Esophagus muscularis mucosa (tissue), 4 donors: ENCODE measurements at regions of chr3 and their contacts with region 1.

Region 1: DNA sequence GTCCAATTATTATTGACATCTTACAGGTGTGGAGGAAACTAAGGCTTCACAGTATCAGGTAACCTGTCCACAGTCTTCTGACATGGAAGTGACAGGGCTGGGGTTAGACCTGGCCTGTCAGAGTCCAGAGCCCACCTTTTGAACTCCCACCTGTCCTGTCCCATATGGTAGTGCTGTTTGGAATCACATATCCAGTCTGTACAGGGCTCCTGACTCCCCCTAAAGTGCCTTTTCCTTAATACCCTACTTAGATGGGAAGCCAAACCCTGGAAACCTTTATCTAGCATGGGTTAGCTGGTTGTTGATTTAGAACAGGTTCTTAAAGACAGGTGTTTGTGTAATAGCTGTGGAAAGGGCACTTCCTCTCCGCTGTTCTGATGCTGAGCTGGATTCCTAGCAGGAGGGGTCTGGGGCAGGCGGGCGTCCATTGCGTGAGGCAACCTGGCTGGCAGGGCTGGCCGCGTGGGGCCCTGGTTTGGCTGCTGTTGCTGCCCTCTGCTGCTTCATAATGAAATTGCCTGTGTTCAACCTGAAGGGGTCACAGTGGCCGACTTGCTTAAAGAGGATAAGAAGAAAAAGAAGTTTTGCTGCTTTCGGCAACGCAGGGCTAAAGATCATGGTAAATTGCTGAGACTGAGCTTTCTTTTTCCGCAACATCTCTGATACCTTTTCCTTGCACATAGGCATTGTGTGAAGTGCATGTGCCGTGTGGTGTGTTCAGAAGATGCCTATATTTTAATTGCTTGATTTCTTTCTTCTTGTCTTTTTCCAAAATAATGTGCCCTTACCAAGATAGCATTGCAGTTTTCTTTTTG is 136.2 kb downstream of the CHDH start:
- DNase-seq: peak; percentile 24
- H3K4me3 ChIP-seq: no peak overlapping the region
- H3K27ac ChIP-seq: no peak overlapping the region
- H3K4me1 ChIP-seq: peaks cover 6 to 13% (median 9%) of the 10 kb centered on the region in 4 donors
- H3K27me3 ChIP-seq: no peaks in the 10 kb centered on the region
- CTCF ChIP-seq: peak; percentile 82 to 86 (median 82)
- EP300 ChIP-seq: no peak
- POLR2A ChIP-seq: no peak

Region 2: GRCh38 chr3:53219895-53220483 is 490.1 kb before region 1 on chr3:
- intact Hi-C with region 1: loop called (anchors 5 kb)
- DNase-seq: no peak
- H3K4me3 ChIP-seq: no peak overlapping the region
- H3K27ac ChIP-seq: no peak overlapping the region
- H3K4me1 ChIP-seq: peaks cover 0 to 6% (median 2%) of the 10 kb centered on the region in 4 donors
- H3K27me3 ChIP-seq: no peaks in the 10 kb centered on the region
- CTCF ChIP-seq: peak; percentile 82 to 90 (median 86)
- EP300 ChIP-seq: no peak
- POLR2A ChIP-seq: no peak

Region 3: GRCh38 chr3:53303957-53304356 is 406.1 kb before region 1 on chr3:
- intact Hi-C with region 1: loop called (anchors 2 kb)
- DNase-seq: no peak
- H3K4me3 ChIP-seq: no peak overlapping the region
- H3K27ac ChIP-seq: peak overlapping the region in 2 of 4 donors; percentile 20 to 34
- H3K4me1 ChIP-seq: peaks cover 16 to 25% (median 24%) of the 10 kb centered on the region in 4 donors
- H3K27me3 ChIP-seq: no peaks in the 10 kb centered on the region
- CTCF ChIP-seq: no peak
- EP300 ChIP-seq: no peak
- POLR2A ChIP-seq: no peak

Region 4: GRCh38 chr3:53375019-53375418 is 335.0 kb before region 1 on chr3:
- intact Hi-C with region 1: loop called (anchors 2 kb)
- DNase-seq: no peak
- H3K4me3 ChIP-seq: no peak overlapping the region
- H3K27ac ChIP-seq: no peak overlapping the region
- H3K4me1 ChIP-seq: peaks cover 0 to 4% (median 1%) of the 10 kb centered on the region in 4 donors
- H3K27me3 ChIP-seq: no peaks in the 10 kb centered on the region
- CTCF ChIP-seq: peak; percentile 71 to 75 (median 72)
- EP300 ChIP-seq: no peak
- POLR2A ChIP-seq: no peak